Left lung (tissue), 14 donors: ENCODE measurements at regions of chr15 and their contacts with region 1.

Region 1: DNA sequence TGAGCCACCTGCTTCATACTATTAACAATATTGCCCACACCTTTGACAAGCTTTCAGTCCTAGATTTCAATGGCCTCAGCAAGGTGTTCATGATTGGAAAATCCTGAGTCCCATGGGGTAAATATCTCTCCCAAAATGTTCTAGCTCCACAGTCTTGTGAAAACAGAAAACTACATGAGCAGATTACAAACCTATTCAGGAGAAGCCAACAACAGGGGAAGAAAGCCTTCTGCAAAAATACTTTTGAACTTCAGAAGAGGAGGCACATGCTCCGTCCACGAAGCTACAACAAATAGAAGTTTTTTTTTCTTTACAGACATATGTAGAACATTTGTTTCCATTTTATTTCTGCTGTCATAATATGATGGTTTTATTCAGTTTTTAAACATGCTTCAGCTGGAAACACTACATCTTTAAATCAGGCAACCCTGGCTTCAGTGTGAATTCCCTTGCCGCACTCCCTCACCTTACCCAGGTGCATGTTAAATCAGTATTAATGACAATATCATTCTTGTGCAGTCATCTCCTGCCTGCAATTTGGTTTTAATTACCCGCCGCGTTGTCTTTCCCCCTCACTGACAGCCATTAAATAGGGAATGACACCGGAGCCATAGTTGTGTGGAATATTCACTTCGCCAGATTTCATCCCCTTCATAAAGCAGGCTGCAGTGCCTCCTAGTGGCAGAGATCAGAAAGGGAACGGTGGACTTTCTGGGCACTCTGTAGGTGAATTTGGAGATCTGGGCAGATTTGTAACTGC is 725.5 kb upstream of the ARRDC4 start:
- DNase-seq: peak in 2 of 4 donors; percentile 65 to 81
- ATAC-seq: peak; percentile 94
- H3K4me3 ChIP-seq: no peak overlapping the region
- H3K27ac ChIP-seq: no peak overlapping the region
- H3K4me1 ChIP-seq: peaks cover 0 to 5% of the 10 kb centered on the region in 2 donors
- H3K27me3 ChIP-seq: no peaks in the 10 kb centered on the region
- CTCF ChIP-seq: peak; percentile 76 to 83

Region 2: GRCh38 chr15:96356494-96357455 is 878.3 kb before region 1 on chr15:
- intact Hi-C with region 1: loop called in 1 of 2 experiments (anchors 10 kb)
- DNase-seq: peak; percentile 69 to 91 (median 82)
- ATAC-seq: peak; percentile 90
- H3K4me3 ChIP-seq: peak overlapping the region; percentile 48 to 56
- H3K27ac ChIP-seq: peak overlapping the region; percentile 61 to 73
- H3K4me1 ChIP-seq: peaks cover 0 to 28% of the 10 kb centered on the region in 2 donors
- H3K27me3 ChIP-seq: peaks cover 39 to 98% of the 10 kb centered on the region in 2 donors
- CTCF ChIP-seq: peak; percentile 95 to 97